Ascending aorta (tissue), 2 donors: ENCODE measurements at regions of chr2 and their contacts with region 1.

Region 1: DNA sequence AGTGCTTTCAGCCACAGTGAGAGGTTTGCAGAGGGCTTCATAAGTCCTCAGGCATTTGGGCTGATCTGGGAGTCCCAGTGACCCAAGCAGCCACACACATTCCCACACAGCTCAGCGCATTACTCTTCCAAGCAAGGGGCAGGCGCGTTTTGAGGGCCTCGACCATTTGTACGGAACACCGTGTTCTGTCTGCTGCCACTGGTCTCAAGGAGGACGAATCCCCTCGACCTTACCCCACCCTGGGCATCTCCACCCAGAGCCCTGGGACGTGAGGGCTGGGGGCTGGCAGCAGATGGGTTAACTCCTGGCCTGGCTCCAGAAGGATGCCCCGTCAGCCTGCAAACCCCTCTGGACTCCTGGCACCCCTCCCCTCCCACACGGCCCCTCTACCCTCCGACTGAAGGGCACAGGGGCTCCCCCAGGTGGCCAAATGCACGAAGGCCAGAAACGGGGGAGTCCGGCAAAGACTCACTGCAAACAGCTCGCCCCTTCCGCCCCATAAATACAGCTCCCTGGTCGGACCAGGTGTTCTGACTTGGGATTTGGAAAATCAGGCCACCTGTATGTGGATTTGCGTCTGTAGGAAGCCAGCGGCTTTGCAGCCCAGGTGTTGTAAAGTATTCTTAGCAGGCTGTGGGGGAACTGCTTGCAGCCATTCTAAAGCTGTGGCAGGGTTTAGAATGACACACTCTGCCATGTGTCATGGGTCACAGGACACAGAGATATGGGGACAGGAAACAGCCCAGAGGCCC is 33.6 kb upstream of the PTMA start:
- DNase-seq: peak in 1 of 2 donors; percentile 88
- H3K4me3 ChIP-seq: no peak overlapping the region
- H3K27ac ChIP-seq: peak overlapping the region; percentile 93 to 95
- H3K4me1 ChIP-seq: peaks cover 7 to 20% of the 10 kb centered on the region in 2 donors
- H3K27me3 ChIP-seq: no peaks in the 10 kb centered on the region
- CTCF ChIP-seq: peak; percentile 84 to 95 (median 90)

Region 2: GRCh38 chr2:231601349-231602229 is 73.2 kb before region 1 on chr2:
- intact Hi-C with region 1: no loop called
- DNase-seq: peak in 1 of 2 donors; percentile 90
- H3K4me3 ChIP-seq: no peak overlapping the region
- H3K27ac ChIP-seq: peak overlapping the region; percentile 20 to 28
- H3K4me1 ChIP-seq: peaks cover 7 to 42% of the 10 kb centered on the region in 2 donors
- H3K27me3 ChIP-seq: no peaks in the 10 kb centered on the region
- CTCF ChIP-seq: peak; percentile 62 to 90 (median 86)

Region 3: DNA sequence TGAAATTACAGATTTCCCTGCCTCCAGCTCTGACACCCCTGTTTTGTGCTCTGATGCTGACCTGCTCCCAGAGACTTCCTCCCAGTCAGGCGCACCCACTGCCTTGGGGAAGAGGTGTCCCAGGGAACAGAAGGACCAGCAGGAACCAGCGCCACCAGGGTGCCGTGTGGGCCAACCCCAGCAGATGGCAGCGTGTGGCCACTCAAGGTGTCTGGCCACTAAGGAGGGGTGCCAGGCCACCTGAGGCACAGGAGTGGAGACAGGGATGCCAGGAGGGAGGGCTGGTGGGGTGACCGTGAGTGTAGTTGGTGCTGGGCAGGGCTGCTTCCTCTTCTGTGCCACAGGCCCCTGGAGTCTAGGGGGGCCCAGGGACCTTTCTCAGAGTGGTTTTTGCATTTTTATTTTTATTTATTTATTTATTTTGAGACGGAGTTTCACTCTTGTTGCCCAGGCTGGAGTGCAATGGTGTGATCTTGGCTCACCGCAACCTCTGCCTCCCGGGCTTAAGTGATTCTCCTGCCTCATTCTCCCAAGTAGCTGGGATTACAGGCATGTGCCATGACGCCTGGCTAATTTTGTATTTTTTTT is 26.1 kb before region 1 on chr2:
- intact Hi-C with region 1: loop called (anchors 2 kb)
- DNase-seq: peak; percentile 37 to 82
- H3K4me3 ChIP-seq: no peak overlapping the region
- H3K27ac ChIP-seq: no peak overlapping the region
- H3K4me1 ChIP-seq: peaks cover 2 to 10% of the 10 kb centered on the region in 2 donors
- H3K27me3 ChIP-seq: no peaks in the 10 kb centered on the region
- CTCF ChIP-seq: peak; percentile 67 to 78 (median 69)

Region 4: DNA sequence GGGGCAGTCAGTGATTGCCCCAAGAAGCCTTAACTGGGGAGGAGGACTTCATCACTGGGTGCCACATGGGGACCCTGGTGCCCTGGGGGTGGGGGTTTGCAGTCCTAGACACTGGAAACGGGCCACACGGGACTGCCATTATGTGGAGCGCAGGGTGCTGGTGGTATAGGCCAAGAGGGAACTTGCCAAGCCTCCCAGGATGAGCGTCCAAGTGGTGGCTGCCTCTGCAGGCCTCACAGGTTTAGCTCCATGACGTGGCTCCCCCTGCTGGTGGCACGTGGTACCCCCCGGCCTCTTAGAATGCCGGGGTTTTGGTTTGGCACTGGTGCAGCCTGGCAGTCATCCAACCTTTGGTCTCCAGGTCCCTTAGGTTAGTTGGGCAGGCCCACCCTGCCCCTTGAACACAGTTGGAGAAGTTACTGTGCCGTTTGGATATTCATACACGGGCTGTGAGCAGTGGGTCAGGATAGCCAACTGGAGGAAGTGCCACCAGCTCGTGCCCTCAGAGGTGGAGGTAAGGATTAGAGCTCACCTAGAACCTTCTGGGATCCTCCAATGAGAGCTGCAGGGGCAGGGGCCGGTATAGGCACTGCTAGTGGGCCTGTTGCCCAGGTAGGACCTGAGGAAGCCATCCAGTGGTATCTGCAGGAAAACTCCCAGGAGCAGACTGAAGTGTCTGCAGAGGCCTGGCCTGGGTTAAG is 39.1 kb after region 1 on chr2:
- intact Hi-C with region 1: loop called (anchors 1 kb)
- DNase-seq: peak; percentile 58 to 95
- H3K4me3 ChIP-seq: no peak overlapping the region
- H3K27ac ChIP-seq: peak overlapping the region; percentile 30 to 83
- H3K4me1 ChIP-seq: peaks cover 23 to 35% of the 10 kb centered on the region in 2 donors
- H3K27me3 ChIP-seq: no peaks in the 10 kb centered on the region
- CTCF ChIP-seq: peak; percentile 88 to 92 (median 90)

Region 5: GRCh38 chr2:232550354-232551249 is 875.8 kb after region 1 on chr2 and contains the starts of genes EIF4E2 and TIGD1:
- intact Hi-C with region 1: loop called (anchors 5 kb)
- DNase-seq: peak; percentile 67 to 97
- H3K4me3 ChIP-seq: peak within 1 kb of the TSS; percentile 84 to 100
- H3K27ac ChIP-seq: peak within 1 kb of the TSS; percentile 97 to 100
- H3K4me1 ChIP-seq: peaks cover 4 to 5% of the 10 kb centered on the region in 2 donors
- H3K27me3 ChIP-seq: no peaks in the 10 kb centered on the region
- CTCF ChIP-seq: peak; percentile 31 to 45 (median 34)
- total RNA-seq, gene EIF4E2: 16.7 TPM
- total RNA-seq, gene TIGD1: 0.53 TPM